ENCODE measurements at regions of chr2 and their contacts with region 1.

Region 1: GRCh38 chr2:85468704-85469349 is 50.3 kb downstream of the SH2D6 start:
- DNase-seq: no peak
- H3K4me3 ChIP-seq: no peak overlapping the region
- H3K27ac ChIP-seq: no peak overlapping the region
- H3K4me1 ChIP-seq: no peaks in the 10 kb centered on the region
- CTCF ChIP-seq: no peak

Region 2: DNA sequence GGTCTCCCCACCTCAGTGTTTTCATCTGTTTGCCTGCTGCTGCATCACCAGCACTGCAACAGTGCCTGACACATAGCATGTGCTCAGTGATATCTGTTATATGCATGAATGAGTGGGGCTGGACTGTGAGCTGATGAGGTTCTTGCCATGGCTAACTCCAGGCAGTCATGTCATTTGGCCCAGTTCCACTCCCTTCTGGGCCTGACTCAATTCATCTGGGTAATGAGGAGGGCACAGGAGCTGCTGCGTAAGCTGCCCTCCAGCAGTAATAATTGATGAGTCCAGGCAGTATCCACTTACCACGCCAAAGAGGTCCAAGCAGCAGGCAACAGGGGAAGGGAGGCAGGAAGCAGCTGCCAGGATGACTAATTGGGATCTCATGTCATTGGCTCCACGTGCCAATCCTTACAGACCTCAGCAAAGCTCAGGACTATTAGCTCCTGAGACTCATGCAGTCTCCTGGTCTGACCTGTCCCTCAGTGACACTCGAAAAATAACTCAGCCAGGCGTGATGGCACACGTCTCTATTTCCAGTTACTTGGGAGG is 36.0 kb after region 1 on chr2:
- CTCF ChIA-PET with region 1: no interaction called
- POLR2A ChIA-PET with region 1: interaction called, 3 read pairs
- intact Hi-C with region 1: loop called (anchors 5 kb)
- DNase-seq: no peak
- H3K4me3 ChIP-seq: no peak overlapping the region
- H3K27ac ChIP-seq: no peak overlapping the region
- H3K4me1 ChIP-seq: no peaks in the 10 kb centered on the region
- CTCF ChIP-seq: no peak

Region 3: DNA sequence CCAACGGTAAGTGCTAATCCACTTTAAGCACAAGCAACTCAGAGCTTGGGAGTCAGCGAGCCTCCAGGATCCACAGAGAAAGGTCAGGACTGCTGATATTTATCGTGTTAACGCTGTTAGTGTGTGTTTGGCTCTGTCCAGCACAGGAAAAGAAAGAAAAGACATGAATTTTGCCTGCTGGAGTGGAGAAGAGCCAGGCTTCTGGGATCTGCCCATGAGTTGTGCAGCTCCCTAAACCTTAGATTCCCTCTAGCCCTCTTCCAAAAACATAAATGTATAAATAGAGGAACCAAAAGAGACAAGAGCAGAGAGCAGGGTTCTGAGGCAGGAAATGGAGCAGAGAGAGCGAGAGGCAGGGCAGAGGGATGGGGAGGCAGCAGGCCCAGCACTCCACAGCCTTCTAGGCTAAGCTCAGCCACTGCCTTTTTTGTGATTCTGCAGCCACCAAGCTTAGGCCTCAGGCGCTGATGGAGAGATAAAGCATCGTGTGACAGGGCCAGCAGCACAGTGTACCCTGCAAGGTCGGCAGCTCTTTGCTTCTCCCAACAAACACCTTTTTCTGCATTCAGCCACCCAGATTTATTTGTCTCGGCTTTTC is 55.6 kb after region 1 on chr2:
- CTCF ChIA-PET with region 1: interaction called, 3 read pairs
- POLR2A ChIA-PET with region 1: interaction called, 3 read pairs
- intact Hi-C with region 1: loop called (anchors 10 kb)
- DNase-seq: no peak
- H3K4me3 ChIP-seq: no peak overlapping the region
- H3K27ac ChIP-seq: no peak overlapping the region
- H3K4me1 ChIP-seq: peaks cover 14% of the 10 kb centered on the region
- CTCF ChIP-seq: no peak